Endothelial cell of umbilical vein (primary cell): ENCODE measurements at regions of chr1 and their contacts with region 1.

Region 1: DNA sequence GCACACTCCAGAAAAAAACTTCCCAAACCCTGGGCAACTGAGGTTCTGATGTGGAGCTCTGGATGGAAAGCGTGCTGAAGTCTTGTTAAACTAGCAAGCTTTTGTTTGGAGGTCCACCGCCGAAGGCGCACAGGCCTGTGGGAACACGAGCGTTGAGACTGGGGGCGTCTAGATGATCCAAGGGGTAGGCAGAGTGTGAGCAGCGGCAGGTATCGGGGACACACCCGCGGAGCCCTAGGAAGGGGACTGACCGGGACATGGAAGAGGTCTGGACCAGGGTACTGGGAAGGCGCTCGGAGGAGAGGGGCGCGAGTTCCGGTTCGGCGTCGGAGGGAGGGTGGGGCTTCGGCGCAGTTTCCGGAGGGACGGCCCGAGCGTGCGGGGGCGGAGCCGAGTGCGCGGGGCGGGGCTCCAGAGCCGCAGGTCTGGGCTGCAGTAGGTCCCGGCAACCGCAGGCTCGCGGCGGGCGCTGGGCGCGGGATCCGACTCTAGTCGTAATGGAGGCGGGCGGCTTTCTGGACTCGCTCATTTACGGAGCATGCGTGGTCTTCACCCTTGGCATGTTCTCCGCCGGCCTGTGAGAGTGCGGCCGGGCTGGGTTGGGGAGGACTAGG is at the start of gene SLC50A1:
- DNase-seq: peak; percentile 97
- H3K4me3 ChIP-seq: peak within 1 kb of the TSS; percentile 21 to 62 (median 53)
- H3K27ac ChIP-seq: peak within 1 kb of the TSS; percentile 98
- H3K4me1 ChIP-seq: peaks cover 49% of the 10 kb centered on the region
- H3K27me3 ChIP-seq: no peaks in the 10 kb centered on the region
- CTCF ChIP-seq: peak in 1 of 2 donors; percentile 32
- POLR2A ChIP-seq: peak; percentile 93
- total RNA-seq, gene SLC50A1: 29.5 and 30.8 TPM in 2 replicates

Region 2: DNA sequence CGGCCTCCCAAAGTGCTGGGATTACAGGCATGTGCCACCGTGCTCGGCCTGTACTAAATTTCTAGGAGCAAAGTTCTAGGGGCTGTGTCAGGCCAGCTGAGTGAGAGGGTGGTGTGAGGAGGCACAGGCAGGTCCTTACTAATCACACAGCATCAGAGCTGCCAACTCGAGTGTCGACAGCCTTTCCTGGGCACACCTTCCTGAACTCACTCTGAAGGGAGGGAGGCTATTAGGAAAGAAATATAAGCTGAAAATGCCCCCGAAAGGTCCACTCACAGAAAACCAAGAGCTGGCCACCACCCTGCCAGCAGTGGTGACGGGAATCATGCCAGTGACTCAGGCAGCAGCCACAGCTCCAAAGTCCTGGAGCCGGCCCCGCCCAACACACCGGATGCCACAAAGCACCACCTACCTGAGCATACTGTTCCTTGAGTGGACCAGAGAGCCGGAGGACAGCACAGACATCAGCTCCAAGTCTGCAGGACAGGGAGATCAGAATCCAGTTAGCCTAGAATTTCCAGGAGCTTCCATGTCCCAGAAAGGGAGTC is 203.5 kb before region 1 on chr1:
- CTCF ChIA-PET with region 1: no interaction called
- POLR2A ChIA-PET with region 1: no interaction called
- dilution Hi-C with region 1: no loop called
- intact Hi-C with region 1: no loop called
- DNase-seq: no peak
- H3K4me3 ChIP-seq: no peak overlapping the region
- H3K27ac ChIP-seq: no peak overlapping the region
- H3K4me1 ChIP-seq: no peaks in the 10 kb centered on the region
- H3K27me3 ChIP-seq: no peaks in the 10 kb centered on the region
- CTCF ChIP-seq: no peak
- POLR2A ChIP-seq: no peak

Region 3: DNA sequence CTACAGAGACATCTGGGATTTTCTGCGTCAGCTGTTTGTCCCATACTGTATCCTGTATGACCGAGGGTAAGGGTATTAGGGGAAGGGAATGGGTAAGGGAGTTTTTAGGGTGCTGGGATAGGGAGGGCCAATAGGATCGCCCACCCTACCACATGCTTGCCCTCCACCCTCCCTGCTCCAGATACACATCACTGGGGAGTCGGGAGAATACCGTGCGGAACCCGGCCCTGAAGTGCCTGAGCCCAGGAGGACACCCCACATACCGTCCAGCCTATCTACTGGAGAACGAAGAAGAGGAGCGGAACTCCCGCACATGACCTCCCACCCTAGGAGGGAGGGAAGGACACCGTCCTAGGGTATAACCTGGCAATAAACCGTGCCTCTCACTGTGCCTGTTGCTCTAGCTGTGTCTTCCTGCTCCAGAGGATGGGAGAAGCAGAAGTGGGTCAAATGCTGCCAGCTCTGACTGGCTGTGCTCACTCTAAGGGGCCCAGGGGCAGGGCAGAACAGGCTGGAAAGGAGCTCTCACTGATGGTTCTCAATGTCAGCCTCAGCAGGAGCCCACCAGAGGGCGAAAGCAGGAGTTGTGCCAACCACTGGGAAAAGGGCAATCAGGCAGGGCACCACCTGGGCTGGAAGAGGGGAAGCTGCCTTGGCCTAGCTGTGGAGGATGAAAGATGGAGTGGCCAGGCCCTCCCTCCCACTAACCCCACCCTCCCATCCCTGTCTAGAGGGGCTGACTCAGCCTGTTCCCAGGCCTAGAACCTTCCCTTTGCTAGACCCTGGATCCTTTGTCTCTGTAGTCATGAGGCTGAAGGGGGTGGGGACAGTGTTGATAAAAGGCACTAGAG is 142.6 kb before region 1 on chr1:
- CTCF ChIA-PET with region 1: no interaction called
- POLR2A ChIA-PET with region 1: interaction called, 10 read pairs
- dilution Hi-C with region 1: no loop called
- intact Hi-C with region 1: no loop called
- DNase-seq: no peak
- H3K4me3 ChIP-seq: no peak overlapping the region
- H3K27ac ChIP-seq: no peak overlapping the region
- H3K4me1 ChIP-seq: peaks cover 2% of the 10 kb centered on the region
- H3K27me3 ChIP-seq: no peaks in the 10 kb centered on the region
- CTCF ChIP-seq: peak in 1 of 2 donors; percentile 40
- POLR2A ChIP-seq: no peak

Region 4: DNA sequence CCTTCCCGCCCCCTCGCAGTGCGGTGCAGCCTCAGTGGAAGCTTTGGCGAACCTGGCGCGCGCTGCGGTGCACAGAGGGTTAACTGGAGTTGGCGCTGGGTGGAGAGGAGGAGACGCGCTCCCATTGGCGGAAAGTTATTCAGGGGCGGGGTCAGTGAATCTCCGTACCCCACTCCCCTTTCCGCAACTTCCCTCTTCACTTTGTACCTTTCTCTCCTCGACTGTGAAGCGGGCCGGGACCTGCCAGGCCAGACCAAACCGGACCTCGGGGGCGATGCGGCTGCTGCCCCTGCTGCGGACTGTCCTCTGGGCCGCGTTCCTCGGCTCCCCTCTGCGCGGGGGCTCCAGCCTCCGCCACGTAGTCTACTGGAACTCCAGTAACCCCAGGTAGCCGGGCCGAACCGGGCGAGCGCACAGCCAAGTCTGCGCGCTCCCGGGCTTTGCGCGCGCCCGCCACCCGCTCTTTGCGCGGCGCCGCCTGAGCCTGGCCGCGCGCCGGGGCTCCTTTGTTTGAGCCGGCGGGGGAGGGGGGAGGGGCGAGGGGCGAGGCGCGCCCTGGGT is 71.9 kb before region 1 on chr1 and contains the start of gene EFNA4:
- CTCF ChIA-PET with region 1: no interaction called
- POLR2A ChIA-PET with region 1: no interaction called
- dilution Hi-C with region 1: no loop called
- intact Hi-C with region 1: no loop called
- DNase-seq: peak; percentile 89
- H3K4me3 ChIP-seq: peak within 1 kb of the TSS; percentile 66 to 98 (median 85)
- H3K27ac ChIP-seq: peak within 1 kb of the TSS; percentile 36
- H3K4me1 ChIP-seq: peaks cover 10% of the 10 kb centered on the region
- H3K27me3 ChIP-seq: no peaks in the 10 kb centered on the region
- CTCF ChIP-seq: no peak
- POLR2A ChIP-seq: peak; percentile 89
- total RNA-seq, gene EFNA4: 16.5 and 17.5 TPM in 2 replicates

Region 5: DNA sequence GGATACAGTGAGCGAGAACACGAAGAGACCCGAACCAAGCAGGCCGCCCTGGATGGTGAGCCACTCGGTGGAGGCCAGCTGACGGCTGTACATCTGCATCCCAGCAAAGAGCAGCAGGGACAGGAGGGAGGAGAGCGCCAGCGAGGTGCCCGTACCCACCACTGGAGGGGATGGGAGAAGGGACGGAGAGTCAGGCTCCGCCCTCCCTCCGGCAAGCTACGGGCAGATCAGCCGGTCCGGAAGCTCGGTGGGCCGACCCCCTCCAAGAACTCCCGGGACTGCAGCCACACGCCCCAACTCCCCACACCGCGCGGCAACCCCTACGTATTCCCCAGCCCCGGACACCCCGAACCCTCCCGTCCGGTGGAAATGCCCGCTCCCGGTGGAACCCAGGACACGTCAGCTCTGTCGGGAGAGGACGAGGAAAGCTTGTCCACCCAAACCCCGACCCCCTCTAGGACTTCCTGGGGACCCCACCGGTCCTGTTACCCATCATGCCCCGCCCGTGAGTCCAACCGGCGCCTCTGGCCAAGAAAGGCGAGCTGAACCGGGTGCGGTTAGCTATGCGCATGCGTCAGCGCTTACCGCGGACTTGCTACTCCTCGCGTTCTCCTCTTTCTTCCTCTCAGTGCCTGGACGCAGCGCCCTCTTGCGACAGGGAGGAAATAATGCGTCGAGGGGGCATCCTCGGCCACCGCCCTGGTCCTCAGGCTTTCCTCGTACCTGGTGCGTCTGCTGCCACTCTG is 37.4 kb after region 1 on chr1 and contains the start of gene KRTCAP2:
- CTCF ChIA-PET with region 1: interaction called, 204 read pairs
- POLR2A ChIA-PET with region 1: interaction called, 3 read pairs
- dilution Hi-C with region 1: no loop called
- intact Hi-C with region 1: no loop called
- DNase-seq: peak; percentile 93
- H3K4me3 ChIP-seq: peak within 1 kb of the TSS; percentile 52 to 91 (median 63)
- H3K27ac ChIP-seq: peak within 1 kb of the TSS; percentile 76
- H3K4me1 ChIP-seq: peaks cover 11% of the 10 kb centered on the region
- H3K27me3 ChIP-seq: no peaks in the 10 kb centered on the region
- CTCF ChIP-seq: peak; percentile 95 to 98
- POLR2A ChIP-seq: peak; percentile 97
- total RNA-seq, gene KRTCAP2: 170 and 207 TPM in 2 replicates